Common myeloid progenitor, CD34-positive (primary cell): ENCODE measurements at regions of chr20 and their contacts with region 1.

Region 1: GRCh38 chr20:35342154-35342769 is 50.0 kb upstream of the FAM83C start:
- DNase-seq: peak in 2 of 3 donors; percentile 7 to 26
- H3K4me3 ChIP-seq: no peak overlapping the region
- H3K27ac ChIP-seq: no peak overlapping the region
- H3K4me1 ChIP-seq: peaks cover 0 to 6% (median 0%) of the 10 kb centered on the region in 4 experiments
- H3K27me3 ChIP-seq: no peaks in the 10 kb centered on the region

Region 2: DNA sequence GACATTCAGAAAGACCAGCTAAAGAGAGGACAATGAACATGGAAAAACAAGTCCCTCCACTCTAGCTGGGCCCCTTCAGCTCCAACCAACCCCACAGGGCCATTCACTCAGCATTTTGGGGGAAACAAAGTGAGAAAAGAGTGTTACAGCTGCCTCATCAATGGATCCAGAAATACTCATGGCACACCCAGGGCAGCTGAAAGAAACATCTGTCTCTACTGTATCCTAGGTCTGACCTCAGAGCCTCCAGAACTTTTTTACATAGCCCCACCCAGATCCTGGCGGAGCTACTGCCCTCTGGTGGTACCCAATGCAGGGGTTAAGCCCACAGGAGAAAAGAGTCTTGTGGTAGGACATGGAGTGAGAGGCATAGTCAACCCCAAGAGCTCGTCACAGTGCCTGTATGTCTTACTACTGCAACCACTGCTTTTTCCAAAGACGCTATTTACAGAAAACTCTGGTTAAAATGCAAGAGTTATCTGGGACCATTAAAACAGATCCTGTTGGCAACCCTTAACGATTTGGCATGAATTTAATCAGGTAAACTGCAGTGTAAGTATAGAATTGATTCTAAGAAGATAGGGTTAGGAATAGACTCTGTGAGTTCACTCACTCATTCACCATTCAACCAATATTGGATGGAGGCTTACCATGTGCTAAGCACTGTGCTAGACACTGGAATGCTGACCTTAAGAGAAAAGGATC is 12.7 kb before region 1 on chr20:
- CTCF ChIA-PET with region 1: interaction called, 12 read pairs
- POLR2A ChIA-PET with region 1: no interaction called
- DNase-seq: peak; percentile 42 to 70 (median 58)
- H3K4me3 ChIP-seq: no peak overlapping the region
- H3K27ac ChIP-seq: no peak overlapping the region
- H3K4me1 ChIP-seq: peaks cover 0 to 5% (median 0%) of the 10 kb centered on the region in 4 experiments
- H3K27me3 ChIP-seq: no peaks in the 10 kb centered on the region